ENCODE measurements at regions of chrX and their contacts with region 1.

Region 1: GRCh38 chrX:123859846-123860838 is at the start of gene XIAP:
- DNase-seq: peak; percentile 79
- ATAC-seq: peak; percentile 86
- H3K4me3 Mint-ChIP-seq: peak within 1 kb of the TSS; percentile 83
- H3K27ac Mint-ChIP-seq: peak within 1 kb of the TSS; percentile 88
- H3K4me1 Mint-ChIP-seq: peaks cover 11% of the 10 kb centered on the region
- H3K27me3 Mint-ChIP-seq: no peaks in the 10 kb centered on the region
- total RNA-seq, gene XIAP: 22.8 to 27.7 TPM

Region 2: DNA sequence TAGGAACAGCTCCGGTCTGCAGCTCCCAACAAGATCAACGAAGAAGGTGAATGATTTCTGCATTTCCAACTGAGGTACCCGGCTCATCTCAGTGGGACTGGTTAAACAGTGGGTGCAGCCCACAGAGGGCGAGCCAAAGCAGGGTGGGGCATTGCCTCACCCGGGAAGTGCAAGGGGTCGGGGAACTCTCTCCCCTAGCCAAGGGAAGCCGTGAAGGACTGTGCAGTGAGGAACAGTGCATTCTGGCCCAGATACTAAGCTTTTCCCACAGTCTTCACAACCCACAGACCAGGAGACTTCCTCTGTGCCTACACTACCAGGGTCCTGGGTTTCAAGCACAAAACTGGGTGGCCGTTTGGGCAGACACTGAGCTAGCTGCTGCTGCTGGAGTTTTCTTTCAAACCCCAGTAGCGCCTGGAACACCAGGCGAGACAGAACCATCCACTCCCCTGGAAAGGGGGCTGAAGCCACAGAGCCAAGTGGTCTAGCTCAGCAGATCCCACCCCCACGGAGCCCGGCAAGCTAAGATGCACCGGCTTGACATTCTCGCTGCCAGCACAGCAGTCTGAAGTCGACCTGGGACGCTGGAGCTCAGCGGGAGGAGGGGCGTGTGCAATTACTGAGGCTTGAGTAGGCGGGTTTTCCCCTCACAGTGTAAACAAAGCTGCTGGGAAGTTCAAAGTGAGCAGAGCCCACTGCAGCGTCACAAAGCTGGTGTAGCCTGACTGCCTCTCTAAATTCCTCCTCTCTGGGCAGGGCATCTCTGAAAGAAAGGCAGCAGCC is 211.9 kb before region 1 on chrX:
- CTCF ChIA-PET with region 1: no interaction called
- POLR2A ChIA-PET with region 1: no interaction called
- intact Hi-C with region 1: no loop called
- DNase-seq: peak; percentile 41
- ATAC-seq: peak; percentile 76
- H3K4me3 Mint-ChIP-seq: no peak overlapping the region
- H3K27ac Mint-ChIP-seq: no peak overlapping the region
- H3K4me1 Mint-ChIP-seq: peaks cover 38% of the 10 kb centered on the region
- H3K27me3 Mint-ChIP-seq: no peaks in the 10 kb centered on the region

Region 3: DNA sequence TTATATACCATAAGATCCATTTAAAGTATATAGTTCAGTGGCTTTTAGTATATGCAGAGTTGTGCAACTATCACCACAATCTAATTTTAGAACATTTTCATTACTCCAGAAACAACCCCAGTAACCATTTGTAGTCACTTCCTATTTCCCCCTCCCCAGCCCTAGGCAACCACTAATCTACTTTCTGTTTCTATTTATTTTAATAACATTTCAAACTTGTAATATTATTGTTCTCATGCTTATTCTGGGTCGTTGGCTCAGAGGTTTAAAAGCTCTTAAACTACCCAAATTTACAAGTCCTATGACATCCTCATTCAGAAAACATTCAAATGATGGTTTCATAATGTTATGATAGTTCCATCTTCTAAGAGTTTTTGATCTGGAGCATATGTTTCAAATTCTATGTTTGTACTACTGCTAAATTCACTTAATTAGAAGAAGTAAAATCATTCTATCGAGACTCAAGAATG is 18.1 kb after region 1 on chrX:
- CTCF ChIA-PET with region 1: no interaction called
- POLR2A ChIA-PET with region 1: no interaction called
- intact Hi-C with region 1: loop called in 1 of 2 experiments (anchors 1 kb)
- DNase-seq: no peak
- ATAC-seq: peak; percentile 17
- H3K4me3 Mint-ChIP-seq: peak overlapping the region; percentile 8
- H3K27ac Mint-ChIP-seq: no peak overlapping the region
- H3K4me1 Mint-ChIP-seq: peaks cover 28% of the 10 kb centered on the region
- H3K27me3 Mint-ChIP-seq: no peaks in the 10 kb centered on the region